Heart left ventricle (tissue), 16 donors: ENCODE measurements at regions of chr3 and their contacts with region 1.

Region 1: DNA sequence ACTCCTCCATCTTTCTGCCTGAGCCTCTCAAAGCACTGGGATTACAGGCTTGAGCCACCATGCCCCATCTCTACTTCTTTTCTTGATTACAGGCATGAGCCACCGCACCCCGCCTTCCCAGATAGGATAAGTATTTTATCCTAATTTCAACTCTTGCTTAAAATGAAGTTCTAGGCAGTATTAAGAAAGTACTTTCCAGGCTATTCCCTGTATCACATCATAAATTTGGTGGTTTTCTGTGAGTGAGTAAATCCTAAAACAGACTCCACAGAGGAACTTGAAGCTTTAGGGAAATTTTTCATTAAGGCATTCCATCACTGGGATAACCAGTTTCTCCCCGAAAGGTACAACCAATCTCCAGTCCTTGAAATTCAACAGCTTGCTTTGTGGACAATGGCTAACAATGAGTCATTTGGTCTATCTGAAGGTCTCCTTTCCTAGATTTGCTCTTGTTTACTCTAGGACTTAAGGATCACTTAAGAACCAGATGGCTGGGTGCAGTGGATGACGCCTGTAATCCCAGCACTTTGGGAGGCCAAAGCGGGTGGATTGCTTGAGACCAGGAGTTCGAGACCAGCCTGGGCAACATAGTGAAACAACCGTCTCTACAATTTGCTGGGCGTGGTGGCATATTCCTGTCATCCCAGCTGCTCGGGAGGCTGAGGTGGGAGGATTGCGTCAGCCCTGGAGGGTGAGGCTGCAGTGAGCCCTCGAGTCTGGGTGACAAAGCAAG is 49.7 kb upstream of the SKIL start:
- DNase-seq: no peak
- ATAC-seq: no peak
- H3K4me3 ChIP-seq: no peak overlapping the region
- H3K27ac ChIP-seq: no peak overlapping the region
- H3K4me1 ChIP-seq: no peaks in the 10 kb centered on the region
- H3K27me3 ChIP-seq: no peaks in the 10 kb centered on the region
- CTCF ChIP-seq: no peak
- POLR2A ChIP-seq: no peak

Region 2: DNA sequence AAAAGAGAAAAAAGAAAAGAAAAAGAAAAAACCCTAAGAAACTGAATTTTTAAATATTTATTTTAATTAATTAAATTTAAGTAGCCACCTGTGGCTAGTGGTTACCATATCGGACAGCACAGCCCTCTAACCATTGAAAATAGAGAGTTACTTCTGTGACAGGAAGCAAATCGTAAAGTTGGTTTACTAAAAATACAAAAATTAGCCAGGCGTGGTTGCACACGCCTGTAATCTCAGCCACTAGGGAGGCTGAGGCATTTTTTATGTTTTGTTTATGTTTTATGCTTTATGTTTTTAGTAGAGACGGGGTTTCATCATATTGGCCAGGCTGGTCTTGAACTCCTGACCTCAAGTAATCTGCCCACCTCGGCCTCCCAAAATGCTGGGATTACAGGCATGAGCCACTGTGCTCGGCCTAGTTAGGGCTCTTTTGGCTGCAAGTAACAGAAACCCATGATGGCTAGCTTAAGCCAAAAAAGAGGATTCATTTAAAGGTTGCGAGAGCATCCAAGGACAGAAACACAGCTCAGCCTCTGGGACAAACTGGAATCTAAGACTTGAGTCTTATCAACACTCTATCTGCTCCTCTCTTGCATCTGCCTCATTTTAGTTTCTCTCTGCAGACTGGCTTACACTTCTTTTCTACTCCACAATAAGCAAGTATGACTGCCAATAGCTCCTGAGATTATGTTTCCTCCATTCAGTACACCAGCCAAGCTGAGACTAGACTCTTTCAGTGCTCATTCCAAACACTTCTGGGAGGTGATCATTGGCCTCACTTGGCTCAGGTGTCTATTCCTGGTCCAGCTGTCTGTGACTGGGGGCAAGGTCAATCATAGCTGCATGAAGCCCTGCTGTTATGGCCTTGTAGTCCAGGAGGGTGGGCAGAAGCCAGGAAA is 42.9 kb after region 1 on chr3:
- intact Hi-C with region 1: loop called in 7 of 10 experiments (anchors 5 kb)
- DNase-seq: no peak
- ATAC-seq: peak in 1 of 4 donors; percentile 8
- H3K4me3 ChIP-seq: no peak overlapping the region
- H3K27ac ChIP-seq: no peak overlapping the region
- H3K4me1 ChIP-seq: peaks cover 0 to 17% (median 6%) of the 10 kb centered on the region in 12 donors
- H3K27me3 ChIP-seq: no peaks in the 10 kb centered on the region
- CTCF ChIP-seq: no peak
- POLR2A ChIP-seq: no peak

Region 3: GRCh38 chr3:170405101-170405500 is 97.3 kb after region 1 on chr3:
- intact Hi-C with region 1: loop called in 9 of 10 experiments (anchors 1 to 5 kb)
- DNase-seq: no peak
- ATAC-seq: no peak
- H3K4me3 ChIP-seq: no peak overlapping the region
- H3K27ac ChIP-seq: no peak overlapping the region
- H3K4me1 ChIP-seq: no peaks in the 10 kb centered on the region
- H3K27me3 ChIP-seq: no peaks in the 10 kb centered on the region
- CTCF ChIP-seq: no peak
- POLR2A ChIP-seq: no peak